Right ventricle myocardium superior (tissue), 1 donor: ENCODE measurements at regions of chr17 and their contacts with region 1.

Region 1: DNA sequence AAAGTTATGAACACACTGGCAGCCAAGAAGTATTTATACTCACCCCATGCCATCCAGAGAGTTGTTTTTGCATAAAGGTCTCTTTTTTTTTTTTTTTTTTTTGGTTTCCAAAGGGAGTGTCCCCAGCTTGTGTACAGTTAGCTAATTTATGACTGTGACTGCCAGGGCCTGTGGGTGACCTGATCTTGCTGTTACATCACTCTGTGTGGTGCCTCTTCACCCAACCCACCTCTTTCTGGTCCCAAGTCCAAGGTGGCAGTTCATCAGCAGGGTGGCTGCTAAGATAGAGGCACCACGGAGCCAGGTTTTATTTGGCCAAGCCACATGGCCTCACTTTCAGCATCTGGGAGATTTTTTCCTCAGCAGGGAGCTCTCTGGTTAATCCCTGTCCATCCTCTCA is at the start of gene NOS2:
- DNase-seq: no peak
- ATAC-seq: no peak
- total RNA-seq, gene NOS2: 0.19 TPM

Region 2: DNA sequence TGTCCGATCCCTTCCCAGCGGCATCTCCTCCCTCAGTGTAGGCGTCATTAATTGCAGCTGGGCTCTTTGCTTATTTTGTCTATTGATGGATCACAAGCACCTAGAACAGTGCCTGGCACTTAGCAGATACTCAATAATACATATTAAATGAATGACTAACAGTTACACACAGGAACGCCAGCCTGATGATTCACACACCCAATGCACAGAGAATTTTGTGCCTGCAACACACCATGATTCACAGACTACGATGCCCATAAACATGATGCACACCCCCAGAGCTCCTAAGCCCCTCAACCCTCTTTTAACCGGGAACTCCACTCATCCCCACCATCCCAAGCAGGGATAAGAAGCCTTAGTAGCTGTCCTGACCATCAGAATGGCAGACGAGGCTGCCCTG is 451.9 kb after region 1 on chr17:
- intact Hi-C with region 1: loop called (anchors 5 kb)
- DNase-seq: no peak
- ATAC-seq: no peak